PC-9 (cell line): ENCODE measurements at regions of chr3 and their contacts with region 1.

Region 1: DNA sequence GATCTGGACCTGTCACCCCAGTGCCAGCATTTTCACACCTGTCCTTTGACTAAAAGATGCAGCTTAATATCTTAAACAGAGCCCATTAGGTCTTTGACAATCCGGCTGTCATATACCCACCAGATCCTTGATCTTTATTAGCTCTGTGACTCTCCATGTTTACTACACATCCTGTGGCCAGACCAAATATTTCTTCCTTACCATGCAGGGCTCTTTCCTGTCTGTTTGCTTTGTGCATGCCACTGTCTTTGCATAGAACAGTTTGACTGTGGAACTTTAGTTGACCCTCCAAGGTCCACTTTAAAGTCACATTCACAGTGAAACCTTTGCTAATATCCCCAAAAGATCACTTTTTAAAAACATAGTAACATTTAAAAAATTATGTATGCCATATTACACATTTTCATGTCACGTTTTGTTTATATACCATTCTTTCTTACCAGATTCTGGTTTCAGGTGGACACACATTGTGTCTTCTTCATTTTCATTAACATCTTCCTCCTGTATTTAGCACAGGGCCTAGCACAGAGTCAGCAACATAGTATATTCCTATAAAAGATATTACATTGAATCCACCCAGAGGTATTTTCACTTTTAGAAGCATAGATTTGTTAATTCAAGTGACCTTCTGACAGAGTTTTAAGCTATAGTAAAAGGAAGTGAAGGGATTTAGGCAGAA is 95.8 kb downstream of the RAP2B start:
- DNase-seq: no peak
- H3K4me3 ChIP-seq: no peak overlapping the region
- H3K27ac ChIP-seq: no peak overlapping the region
- H3K4me1 ChIP-seq: no peaks in the 10 kb centered on the region
- H3K27me3 ChIP-seq: no peaks in the 10 kb centered on the region
- CTCF ChIP-seq: no peak

Region 2: DNA sequence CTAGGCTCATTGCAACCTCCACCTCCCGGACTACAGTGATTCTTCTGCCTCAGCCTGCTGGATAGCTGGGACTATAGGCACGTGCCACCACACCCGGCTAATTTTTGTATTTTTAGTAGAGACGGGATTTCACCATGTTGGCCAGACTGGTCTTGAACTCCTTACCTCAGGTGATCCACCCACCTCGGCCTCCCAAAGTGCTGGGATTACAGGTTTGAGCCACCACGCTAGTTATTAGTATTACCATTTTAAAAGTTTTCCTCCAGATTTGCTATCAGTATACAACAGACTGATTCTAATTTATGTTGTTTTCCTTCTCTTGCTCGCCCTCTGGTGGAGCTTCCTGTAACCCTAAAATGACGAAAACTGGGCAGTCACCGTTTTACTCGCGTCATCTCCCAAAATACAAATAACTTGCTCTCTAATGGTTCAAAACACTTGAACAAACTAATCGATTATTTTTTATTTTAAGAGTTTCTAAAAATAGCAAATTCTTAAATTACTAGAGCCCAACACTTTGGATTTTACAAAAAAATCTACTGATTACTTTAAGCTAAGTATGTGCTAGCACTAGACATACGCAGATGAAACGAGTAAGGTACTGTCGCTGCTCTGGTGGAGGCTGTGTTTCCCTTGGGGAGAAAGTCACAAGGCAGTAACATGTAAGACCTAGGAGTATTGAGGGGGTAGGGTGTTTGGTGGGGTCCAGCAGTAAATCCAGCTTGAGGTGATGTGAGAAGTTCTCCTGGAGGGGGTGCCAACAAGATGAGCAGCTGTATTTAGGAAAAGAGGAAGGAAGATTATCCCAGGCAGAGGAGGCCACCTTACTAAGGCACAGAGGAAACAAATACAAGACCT is 785.8 kb before region 1 on chr3:
- CTCF ChIA-PET with region 1: no interaction called
- POLR2A ChIA-PET with region 1: no interaction called
- intact Hi-C with region 1: no loop called
- DNase-seq: peak in 1 of 2 experiments; percentile 25
- H3K4me3 ChIP-seq: no peak overlapping the region
- H3K27ac ChIP-seq: no peak overlapping the region
- H3K4me1 ChIP-seq: no peaks in the 10 kb centered on the region
- H3K27me3 ChIP-seq: no peaks in the 10 kb centered on the region
- CTCF ChIP-seq: peak; percentile 61

Region 3: GRCh38 chr3:153221748-153222162 is 36.1 kb before region 1 on chr3:
- CTCF ChIA-PET with region 1: interaction called, 4 read pairs
- POLR2A ChIA-PET with region 1: no interaction called
- intact Hi-C with region 1: loop called (anchors 2 kb)
- DNase-seq: peak; percentile 72 to 92
- H3K4me3 ChIP-seq: no peak overlapping the region
- H3K27ac ChIP-seq: peak overlapping the region; percentile 59
- H3K4me1 ChIP-seq: peaks cover 19% of the 10 kb centered on the region
- H3K27me3 ChIP-seq: no peaks in the 10 kb centered on the region
- CTCF ChIP-seq: no peak